Activated CD8-positive, alpha-beta memory T cell treated with anti-CD3 and anti-CD28 coated beads, Interleukin-2, amount 10 ng/mL, durations not matched to agents 7 days and 5 days (primary cell): ENCODE measurements at regions of chr16 and their contacts with region 1.

Region 1: GRCh38 chr16:29011112-29011511 is 26.3 kb downstream of the LAT start:
- DNase-seq: no peak
- ATAC-seq: no peak
- H3K4me3 Mint-ChIP-seq: no peak overlapping the region
- H3K27ac Mint-ChIP-seq: no peak overlapping the region
- H3K4me1 Mint-ChIP-seq: peaks cover 50% of the 10 kb centered on the region
- H3K27me3 Mint-ChIP-seq: no peaks in the 10 kb centered on the region

Region 2: GRCh38 chr16:28974437-28975157 is 36.5 kb before region 1 on chr16 and contains the start of gene SPNS1:
- CTCF ChIA-PET with region 1: interaction called, 10 read pairs
- DNase-seq: peak; percentile 98
- ATAC-seq: peak; percentile 97
- H3K4me3 Mint-ChIP-seq: peak within 1 kb of the TSS; percentile 95
- H3K27ac Mint-ChIP-seq: peak within 1 kb of the TSS; percentile 91
- H3K4me1 Mint-ChIP-seq: peaks cover 28% of the 10 kb centered on the region
- H3K27me3 Mint-ChIP-seq: no peaks in the 10 kb centered on the region
- total RNA-seq, gene SPNS1: 22.1 to 27.6 TPM

Region 3: GRCh38 chr16:29022196-29022595 is 11.1 kb after region 1 on chr16:
- CTCF ChIA-PET with region 1: interaction called, 11 read pairs
- DNase-seq: no peak
- ATAC-seq: no peak
- H3K4me3 Mint-ChIP-seq: no peak overlapping the region
- H3K27ac Mint-ChIP-seq: no peak overlapping the region
- H3K4me1 Mint-ChIP-seq: peaks cover 43% of the 10 kb centered on the region
- H3K27me3 Mint-ChIP-seq: no peaks in the 10 kb centered on the region

Region 4: DNA sequence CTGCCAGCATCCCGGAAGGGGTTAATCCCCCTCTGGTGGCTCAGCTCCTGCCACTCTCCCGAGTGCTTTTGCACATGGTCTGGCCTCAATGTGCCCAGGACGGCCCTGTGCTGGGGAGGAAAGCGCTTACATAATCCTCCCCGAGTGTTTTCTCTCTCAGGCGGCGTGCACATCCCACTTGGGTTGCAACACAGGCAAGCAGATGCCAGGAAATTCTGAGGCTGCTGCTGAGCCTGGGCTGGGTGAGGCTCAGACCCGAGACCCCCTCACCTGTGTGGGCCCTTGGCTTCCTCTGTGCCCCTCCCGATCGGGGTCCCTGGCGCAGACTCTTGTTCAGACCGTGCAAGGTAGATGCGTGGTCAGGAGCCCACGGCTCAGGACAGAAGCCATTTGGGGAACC is 118.4 kb after region 1 on chr16:
- CTCF ChIA-PET with region 1: no interaction called
- DNase-seq: no peak
- ATAC-seq: no peak
- H3K4me3 Mint-ChIP-seq: no peak overlapping the region
- H3K27ac Mint-ChIP-seq: no peak overlapping the region
- H3K4me1 Mint-ChIP-seq: peaks cover 10% of the 10 kb centered on the region
- H3K27me3 Mint-ChIP-seq: no peaks in the 10 kb centered on the region

Region 5: GRCh38 chr16:29729116-29729521 is 718.0 kb after region 1 on chr16:
- CTCF ChIA-PET with region 1: no interaction called
- DNase-seq: no peak
- ATAC-seq: no peak
- H3K4me3 Mint-ChIP-seq: no peak overlapping the region
- H3K27ac Mint-ChIP-seq: no peak overlapping the region
- H3K4me1 Mint-ChIP-seq: peaks cover 34% of the 10 kb centered on the region
- H3K27me3 Mint-ChIP-seq: peaks cover 13% of the 10 kb centered on the region